ENCODE measurements at regions of chr12 and their contacts with region 1.

Region 1: DNA sequence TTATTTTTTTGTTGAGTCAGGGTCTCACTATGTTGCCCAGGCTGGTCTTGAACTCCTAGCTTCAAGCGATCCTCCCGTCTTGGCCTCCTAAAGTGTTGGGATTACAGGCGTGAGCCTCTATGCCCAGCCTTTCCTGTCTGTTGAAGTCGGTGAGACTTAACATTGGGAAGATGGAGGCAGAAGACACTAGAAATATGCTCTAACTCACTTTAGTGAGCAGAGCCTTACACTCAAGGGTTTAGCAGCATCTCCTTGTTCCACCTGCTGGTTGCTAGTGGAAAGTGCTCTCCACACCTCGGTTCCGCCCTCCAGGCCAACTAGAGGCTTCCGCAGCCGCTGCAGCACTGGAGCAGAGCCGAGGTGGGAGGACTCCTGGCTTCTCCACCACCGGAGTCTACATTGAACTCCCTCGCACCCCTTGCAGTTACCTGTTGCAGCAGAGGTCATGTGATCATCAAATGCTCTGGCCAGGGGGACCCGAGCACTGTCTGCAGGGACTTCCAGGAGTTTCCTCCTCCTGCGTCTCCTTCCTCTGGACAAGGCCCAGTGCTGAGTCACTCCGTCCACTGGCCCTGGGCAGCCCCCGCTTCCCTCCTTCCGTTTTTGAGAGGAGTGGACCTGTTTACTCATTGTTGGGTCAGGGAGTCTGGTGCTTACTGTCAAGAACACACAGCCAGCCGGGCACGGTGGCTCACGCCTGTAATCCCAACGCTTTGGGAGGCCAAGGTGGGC is 9.4 kb upstream of the HVCN1 start:
- DNase-seq: peak; percentile 79 to 84
- ATAC-seq: peak; percentile 68 to 91 (median 86)
- H3K4me3 ChIP-seq: peak overlapping the region in 5 of 10 donors; percentile 23 to 44 (median 31)
- H3K27ac ChIP-seq: peak overlapping the region in 8 of 10 donors; percentile 21 to 73 (median 52)
- H3K4me1 ChIP-seq: peaks cover 9 to 54% (median 28%) of the 10 kb centered on the region in 9 donors
- H3K27me3 ChIP-seq: no peaks in the 10 kb centered on the region
- CTCF ChIP-seq: peak; percentile 48 to 89 (median 76)

Region 2: GRCh38 chr12:110468212-110469048 is 229.9 kb before region 1 on chr12 and contains the starts of genes FAM216A and GPN3:
- intact Hi-C with region 1: loop called in 1 of 10 experiments (anchors 10 kb)
- DNase-seq: peak; percentile 95 to 98
- ATAC-seq: peak; percentile 94 to 97 (median 96)
- H3K4me3 ChIP-seq: peak within 1 kb of the TSS; percentile 56 to 90 (median 77)
- H3K27ac ChIP-seq: peak within 1 kb of the TSS; percentile 62 to 96 (median 88)
- H3K4me1 ChIP-seq: peaks cover 7 to 28% (median 24%) of the 10 kb centered on the region in 9 donors
- H3K27me3 ChIP-seq: no peaks in the 10 kb centered on the region
- CTCF ChIP-seq: no peak
- total RNA-seq, gene FAM216A: 2.4 to 9.2 (median 5.4) TPM
- total RNA-seq, gene GPN3: 25.3 to 37.5 (median 31.1) TPM

Region 3: GRCh38 chr12:110513842-110514241 is 184.5 kb before region 1 on chr12:
- intact Hi-C with region 1: loop called in 4 of 10 experiments (anchors 2 to 10 kb)
- DNase-seq: no peak
- ATAC-seq: no peak
- H3K4me3 ChIP-seq: no peak overlapping the region
- H3K27ac ChIP-seq: no peak overlapping the region
- H3K4me1 ChIP-seq: peaks cover 0 to 5% (median 0%) of the 10 kb centered on the region in 9 donors
- H3K27me3 ChIP-seq: no peaks in the 10 kb centered on the region
- CTCF ChIP-seq: no peak

Region 4: GRCh38 chr12:110639336-110640141 is 58.8 kb before region 1 on chr12:
- intact Hi-C with region 1: loop called in 3 of 10 experiments (anchors 2 to 5 kb)
- DNase-seq: no peak
- ATAC-seq: peak in 6 of 8 donors; percentile 36 to 62 (median 59)
- H3K4me3 ChIP-seq: no peak overlapping the region
- H3K27ac ChIP-seq: peak overlapping the region in 8 of 10 donors; percentile 43 to 71 (median 60)
- H3K4me1 ChIP-seq: peaks cover 6 to 42% (median 21%) of the 10 kb centered on the region in 9 donors
- H3K27me3 ChIP-seq: no peaks in the 10 kb centered on the region
- CTCF ChIP-seq: no peak

Region 5: DNA sequence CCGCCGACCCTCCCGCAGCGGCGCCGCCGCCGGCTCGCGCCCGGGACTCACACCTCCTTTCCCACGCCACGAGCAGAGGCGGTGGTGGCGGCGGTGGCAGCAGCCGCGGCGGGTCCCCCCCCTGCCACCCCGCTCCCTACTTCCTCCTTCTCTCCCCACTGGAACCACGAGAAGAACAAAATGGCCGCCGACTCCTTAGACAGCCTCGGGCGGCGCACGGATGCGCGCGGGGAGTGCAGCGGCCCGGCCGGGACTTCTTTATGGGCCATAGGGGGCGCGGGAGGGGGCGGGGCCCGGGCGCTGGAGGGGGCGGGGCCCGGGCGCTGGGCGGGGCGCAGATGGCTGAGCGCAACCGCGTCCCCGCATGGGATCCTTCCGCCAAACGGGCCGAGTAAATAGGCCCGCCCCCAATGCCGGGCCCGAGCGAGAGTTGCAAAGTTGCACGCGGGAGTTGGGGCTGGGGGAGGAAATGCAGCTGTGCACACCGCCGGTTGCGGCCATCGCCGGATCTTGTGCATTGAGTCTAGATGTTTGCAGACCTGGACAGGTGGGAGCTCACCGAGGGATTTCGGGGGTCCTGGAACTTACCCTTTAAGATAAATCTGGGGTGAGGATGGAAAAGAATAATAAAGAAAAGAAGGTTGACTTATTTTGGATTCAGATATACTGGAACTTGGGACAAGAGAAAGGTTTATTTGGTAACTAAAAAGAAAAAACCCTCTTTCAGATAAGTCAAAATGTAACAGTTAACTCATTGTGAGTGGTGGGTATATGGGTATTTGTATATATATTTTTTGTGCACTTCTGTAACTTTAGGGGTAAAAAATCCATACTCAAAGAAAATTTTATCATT is 44.6 kb after region 1 on chr12 and contains the start of gene PPP1CC:
- intact Hi-C with region 1: loop called in 1 of 10 experiments (anchors 5 kb)
- DNase-seq: peak; percentile 93 to 94
- ATAC-seq: peak; percentile 94 to 97 (median 96)
- H3K4me3 ChIP-seq: peak within 1 kb of the TSS; percentile 71 to 99 (median 94)
- H3K27ac ChIP-seq: peak within 1 kb of the TSS; percentile 70 to 94 (median 92)
- H3K4me1 ChIP-seq: peaks cover 12 to 63% (median 55%) of the 10 kb centered on the region in 9 donors
- H3K27me3 ChIP-seq: no peaks in the 10 kb centered on the region
- CTCF ChIP-seq: peak in 2 of 9 donors; percentile 8 to 36
- total RNA-seq, gene PPP1CC: 116 to 248 (median 137) TPM

Region 6: DNA sequence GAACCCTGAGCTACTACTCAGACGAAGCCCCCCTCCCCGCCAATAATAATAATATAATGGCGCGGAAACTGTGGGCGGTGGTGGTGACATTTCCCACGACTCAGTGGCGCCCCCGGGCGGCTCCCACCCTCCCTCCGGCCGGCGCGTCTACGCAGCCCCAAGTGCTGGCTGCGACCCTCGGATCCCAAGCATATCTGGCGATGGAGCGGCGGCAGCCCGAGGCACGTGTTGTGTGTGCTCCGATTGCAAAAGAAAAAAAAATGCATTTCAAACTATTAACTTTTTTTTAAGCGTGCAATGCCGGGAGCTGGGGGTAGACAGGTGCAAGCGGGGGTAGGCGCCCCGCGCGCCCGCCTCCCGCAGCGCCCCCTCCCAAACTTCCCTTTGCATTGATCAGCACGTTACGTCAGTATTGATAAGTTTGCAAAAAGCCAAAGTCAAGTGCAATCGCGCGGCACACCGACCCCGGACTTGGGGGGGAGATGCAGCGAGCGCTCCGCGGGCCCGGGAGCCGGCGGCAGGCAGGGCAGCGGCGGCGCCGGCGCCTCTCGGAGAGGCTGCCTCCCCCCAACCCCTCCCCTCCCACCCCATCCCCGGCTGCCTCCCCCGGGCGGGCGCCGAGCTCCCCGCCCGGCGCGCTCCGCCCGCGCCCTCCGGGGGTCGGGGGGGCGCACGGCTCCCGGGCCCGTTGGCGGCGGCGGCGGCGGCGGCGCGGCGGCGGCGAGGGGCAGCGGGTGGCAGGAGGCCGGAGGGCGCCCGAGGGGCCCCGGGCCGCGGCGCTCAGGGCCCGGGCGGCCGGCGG is 335.1 kb after region 1 on chr12:
- intact Hi-C with region 1: no loop called
- DNase-seq: no peak
- ATAC-seq: no peak
- H3K4me3 ChIP-seq: peak overlapping the region in 6 of 10 donors; percentile 22 to 41 (median 36)
- H3K27ac ChIP-seq: no peak overlapping the region
- H3K4me1 ChIP-seq: peaks cover 0 to 22% (median 7%) of the 10 kb centered on the region in 9 donors
- H3K27me3 ChIP-seq: peaks cover 9 to 99% (median 92%) of the 10 kb centered on the region in 7 donors
- CTCF ChIP-seq: peak in 5 of 9 donors; percentile 5 to 33 (median 24)